Vagina (tissue), 2 donors: ENCODE measurements at regions of chr5 and their contacts with region 1.

Region 1: GRCh38 chr5:169583424-169584204 is at the start of gene SPDL1:
- DNase-seq: peak; percentile 96 to 97
- H3K4me3 ChIP-seq: peak within 1 kb of the TSS; percentile 55 to 77
- H3K27ac ChIP-seq: peak within 1 kb of the TSS; percentile 62
- H3K4me1 ChIP-seq: peaks cover 12% of the 10 kb centered on the region
- H3K27me3 ChIP-seq: no peaks in the 10 kb centered on the region
- CTCF ChIP-seq: no peak
- POLR2A ChIP-seq: peak in 1 of 2 donors; percentile 37
- total RNA-seq, gene SPDL1: 13.3 TPM

Region 2: DNA sequence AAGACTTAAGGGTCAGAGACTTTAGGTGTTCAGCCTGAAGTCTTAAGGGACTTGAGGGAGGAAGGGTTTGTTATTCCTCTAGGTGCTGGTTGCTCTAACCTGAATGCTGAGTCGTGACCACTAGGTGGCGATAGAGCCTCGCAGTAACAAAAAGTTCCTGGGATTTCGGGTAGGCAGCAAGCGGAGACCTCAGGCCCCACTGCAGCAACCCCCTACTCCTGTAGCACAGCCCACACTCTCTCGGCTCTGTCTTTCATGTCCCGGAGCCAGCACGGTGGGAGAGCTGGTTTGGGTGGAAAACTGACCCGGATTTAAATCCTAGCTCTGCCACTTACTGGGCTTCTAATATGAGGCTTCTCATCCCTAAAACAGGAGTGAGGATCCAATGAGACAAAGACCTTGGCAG is 904.1 kb before region 1 on chr5:
- intact Hi-C with region 1: loop called (anchors 10 kb)
- DNase-seq: no peak
- H3K4me3 ChIP-seq: no peak overlapping the region
- H3K27ac ChIP-seq: no peak overlapping the region
- H3K4me1 ChIP-seq: peaks cover 10% of the 10 kb centered on the region
- H3K27me3 ChIP-seq: no peaks in the 10 kb centered on the region
- CTCF ChIP-seq: peak; percentile 79 to 87 (median 85)
- POLR2A ChIP-seq: no peak